AG04450 (cell line): ENCODE measurements at regions of chr20 and their contacts with region 1.

Region 1: DNA sequence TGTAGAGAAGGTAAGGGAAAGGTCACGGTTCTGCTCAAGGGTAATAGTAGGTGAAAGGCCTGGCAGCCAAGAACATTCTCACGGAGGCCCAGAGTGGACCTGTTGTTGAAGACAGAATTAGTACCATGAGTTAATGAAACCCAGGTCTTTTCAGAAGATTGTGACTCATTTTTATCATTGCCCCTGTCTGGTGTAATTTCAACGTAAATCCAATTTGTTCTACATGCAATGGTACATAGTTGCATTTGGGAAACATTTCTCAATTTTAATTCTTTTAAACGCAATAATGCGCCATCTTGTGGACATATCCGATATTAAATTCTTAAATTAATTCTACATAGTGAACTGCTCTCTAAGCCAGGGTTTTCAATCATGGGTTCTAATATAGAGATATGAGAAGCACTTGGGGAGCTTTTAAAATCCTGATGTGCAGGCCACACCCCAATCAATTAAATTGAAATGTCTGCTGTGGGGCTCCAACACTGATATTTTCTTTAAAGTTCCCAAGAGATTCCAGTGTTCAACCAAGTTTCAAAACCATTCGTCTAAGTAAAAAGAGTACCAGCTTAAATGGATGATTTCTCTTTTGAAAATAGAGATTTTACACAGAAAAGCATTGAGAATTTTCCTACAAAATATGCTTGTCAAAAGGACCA is 257.4 kb downstream of the PLCB1 start:
- DNase-seq: peak; percentile 32
- H3K4me3 ChIP-seq: no peak overlapping the region
- H3K27ac ChIP-seq: no peak overlapping the region
- H3K27me3 ChIP-seq: no peaks in the 10 kb centered on the region
- CTCF ChIP-seq: peak; percentile 46

Region 2: DNA sequence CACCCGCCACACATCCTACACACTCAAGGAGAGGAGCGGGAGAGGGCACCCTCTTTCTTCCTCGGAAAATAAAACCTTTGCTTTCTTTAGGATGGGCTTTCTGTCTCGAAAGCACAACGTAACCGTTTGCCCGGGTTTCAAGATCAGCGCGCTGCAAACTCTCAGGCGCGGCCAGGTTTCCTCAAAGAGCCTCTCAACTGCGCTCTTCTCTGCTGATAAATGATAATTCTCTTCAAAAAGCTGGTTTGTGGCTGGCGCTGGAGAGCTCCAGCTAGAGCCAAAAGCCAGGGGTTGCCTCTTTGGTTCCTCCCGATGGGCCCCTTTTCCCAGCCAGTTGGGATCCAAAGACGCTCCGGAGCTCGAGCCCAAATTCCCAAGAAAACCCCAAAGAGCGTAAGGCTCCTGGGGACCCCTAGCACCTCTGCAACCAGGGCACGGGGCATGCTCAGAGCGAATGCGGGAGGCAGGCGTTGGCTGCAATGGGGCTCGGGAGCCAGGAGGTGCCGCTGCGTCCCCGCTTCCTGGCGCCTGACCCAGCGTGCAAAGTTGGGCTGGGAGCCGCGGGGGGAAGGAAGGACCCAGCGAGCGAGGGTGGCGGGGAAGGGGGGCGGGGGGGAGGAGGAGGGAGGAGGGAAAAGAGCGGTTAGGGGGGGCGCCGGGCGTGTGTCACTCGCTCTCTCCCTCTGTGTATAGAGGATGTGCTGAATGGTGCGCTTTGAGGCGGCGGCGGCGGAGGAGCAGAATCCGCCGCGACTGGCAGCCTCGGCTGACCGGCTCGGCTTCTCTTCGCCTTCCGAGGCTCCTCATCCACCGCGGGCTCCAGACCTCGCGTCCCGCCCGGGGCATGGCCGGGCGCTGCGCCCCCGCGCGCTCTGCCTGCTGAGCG is 257.7 kb before region 1 on chr20 and contains the start of gene PLCB1:
- CTCF ChIA-PET with region 1: interaction called, 59 read pairs
- POLR2A ChIA-PET with region 1: interaction called, 3 read pairs
- DNase-seq: peak; percentile 66
- H3K4me3 ChIP-seq: peak within 1 kb of the TSS; percentile 75
- H3K27ac ChIP-seq: peak within 1 kb of the TSS; percentile 58
- H3K27me3 ChIP-seq: no peaks in the 10 kb centered on the region
- CTCF ChIP-seq: peak; percentile 94
- polyA plus RNA-seq, gene PLCB1: 12.3 and 16.4 TPM in 2 replicates

Region 3: GRCh38 chr20:8139899-8140298 is 249.6 kb before region 1 on chr20:
- CTCF ChIA-PET with region 1: interaction called, 21 read pairs
- POLR2A ChIA-PET with region 1: no interaction called
- DNase-seq: no peak
- H3K4me3 ChIP-seq: no peak overlapping the region
- H3K27ac ChIP-seq: no peak overlapping the region
- H3K27me3 ChIP-seq: no peaks in the 10 kb centered on the region
- CTCF ChIP-seq: no peak

Region 4: DNA sequence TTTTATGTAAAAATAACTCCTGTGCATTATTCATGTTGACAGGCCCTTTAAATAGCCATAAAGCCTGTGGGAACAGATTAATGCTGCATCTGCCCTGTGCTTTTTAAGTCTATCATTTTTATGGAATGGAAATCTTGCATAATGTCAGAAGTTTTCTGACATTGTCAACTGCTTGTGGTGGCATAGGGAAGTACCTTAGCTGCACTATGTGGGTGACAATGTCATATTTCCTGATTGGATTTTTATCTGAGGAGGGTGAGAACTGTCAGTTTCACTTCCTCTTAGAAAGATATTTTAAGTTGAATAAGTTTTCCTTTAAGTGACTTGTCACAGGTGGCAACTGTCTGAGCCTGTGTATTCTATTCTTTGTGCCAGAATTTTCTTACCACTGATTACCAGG is 10.4 kb after region 1 on chr20:
- CTCF ChIA-PET with region 1: interaction called, 40 read pairs
- POLR2A ChIA-PET with region 1: no interaction called
- DNase-seq: no peak
- H3K4me3 ChIP-seq: no peak overlapping the region
- H3K27ac ChIP-seq: no peak overlapping the region
- H3K27me3 ChIP-seq: no peaks in the 10 kb centered on the region
- CTCF ChIP-seq: no peak